Heart right ventricle (tissue), 16 donors: ENCODE measurements at regions of chr1 and their contacts with region 1.

Region 1: DNA sequence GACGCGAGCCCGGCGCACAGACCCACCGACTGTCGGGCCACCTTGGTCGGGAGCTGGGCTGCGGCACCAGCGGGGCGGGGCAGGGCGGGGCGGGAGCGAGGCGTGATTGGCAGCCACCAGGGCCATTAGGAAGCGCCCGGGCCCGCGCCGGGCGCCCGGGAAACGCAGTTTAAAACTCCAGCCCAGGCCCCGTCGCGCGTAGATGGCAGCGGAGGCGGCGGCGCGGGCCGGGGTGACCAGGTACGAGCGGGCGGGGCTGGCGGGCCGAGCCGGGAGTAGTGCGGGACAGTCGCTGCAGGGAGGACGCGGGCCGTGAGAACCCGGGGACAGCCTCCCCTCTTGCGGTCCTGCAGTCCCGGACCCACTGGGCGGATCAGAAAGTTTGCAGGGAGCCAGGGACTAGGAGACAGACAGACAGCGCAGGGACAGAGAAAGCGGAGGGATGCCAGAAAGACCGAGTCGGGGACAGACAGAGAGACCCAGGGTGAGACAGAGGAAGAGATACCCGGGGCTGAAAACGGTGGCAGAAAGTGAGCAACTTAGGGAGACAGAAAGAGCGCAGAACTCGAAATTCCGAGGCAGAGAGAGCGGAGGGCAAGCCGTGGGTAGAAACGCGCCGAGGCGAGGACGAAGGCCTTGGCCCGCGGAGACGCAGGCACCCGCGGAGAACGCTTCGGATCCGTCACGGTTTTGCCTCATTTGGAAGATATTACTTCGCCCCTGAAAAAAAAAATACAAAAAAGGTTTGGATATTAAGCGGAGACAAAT is at the start of gene DMBX1:
- DNase-seq: peak in 1 of 2 donors; percentile 20
- ATAC-seq: peak in 6 of 8 donors; percentile 33 to 66 (median 50)
- H3K4me3 ChIP-seq: peak within 1 kb of the TSS in 9 of 10 donors; percentile 22 to 46 (median 38)
- H3K27ac ChIP-seq: no peak within 1 kb of the TSS
- H3K4me1 ChIP-seq: peaks cover 4 to 26% (median 19%) of the 10 kb centered on the region in 9 donors
- H3K27me3 ChIP-seq: peaks cover 37 to 100% (median 100%) of the 10 kb centered on the region in 7 donors
- CTCF ChIP-seq: no peak
- total RNA-seq, gene DMBX1: not detected

Region 2: GRCh38 chr1:46522184-46522968 is 32.6 kb after region 1 on chr1:
- intact Hi-C with region 1: loop called in 1 of 10 experiments (anchors 5 kb)
- DNase-seq: no peak
- ATAC-seq: peak in 4 of 8 donors; percentile 9 to 71 (median 18)
- H3K4me3 ChIP-seq: no peak overlapping the region
- H3K27ac ChIP-seq: no peak overlapping the region
- H3K4me1 ChIP-seq: peaks cover 0 to 17% (median 4%) of the 10 kb centered on the region in 9 donors
- H3K27me3 ChIP-seq: peaks cover 0 to 63% (median 54%) of the 10 kb centered on the region in 7 donors
- CTCF ChIP-seq: no peak

Region 3: DNA sequence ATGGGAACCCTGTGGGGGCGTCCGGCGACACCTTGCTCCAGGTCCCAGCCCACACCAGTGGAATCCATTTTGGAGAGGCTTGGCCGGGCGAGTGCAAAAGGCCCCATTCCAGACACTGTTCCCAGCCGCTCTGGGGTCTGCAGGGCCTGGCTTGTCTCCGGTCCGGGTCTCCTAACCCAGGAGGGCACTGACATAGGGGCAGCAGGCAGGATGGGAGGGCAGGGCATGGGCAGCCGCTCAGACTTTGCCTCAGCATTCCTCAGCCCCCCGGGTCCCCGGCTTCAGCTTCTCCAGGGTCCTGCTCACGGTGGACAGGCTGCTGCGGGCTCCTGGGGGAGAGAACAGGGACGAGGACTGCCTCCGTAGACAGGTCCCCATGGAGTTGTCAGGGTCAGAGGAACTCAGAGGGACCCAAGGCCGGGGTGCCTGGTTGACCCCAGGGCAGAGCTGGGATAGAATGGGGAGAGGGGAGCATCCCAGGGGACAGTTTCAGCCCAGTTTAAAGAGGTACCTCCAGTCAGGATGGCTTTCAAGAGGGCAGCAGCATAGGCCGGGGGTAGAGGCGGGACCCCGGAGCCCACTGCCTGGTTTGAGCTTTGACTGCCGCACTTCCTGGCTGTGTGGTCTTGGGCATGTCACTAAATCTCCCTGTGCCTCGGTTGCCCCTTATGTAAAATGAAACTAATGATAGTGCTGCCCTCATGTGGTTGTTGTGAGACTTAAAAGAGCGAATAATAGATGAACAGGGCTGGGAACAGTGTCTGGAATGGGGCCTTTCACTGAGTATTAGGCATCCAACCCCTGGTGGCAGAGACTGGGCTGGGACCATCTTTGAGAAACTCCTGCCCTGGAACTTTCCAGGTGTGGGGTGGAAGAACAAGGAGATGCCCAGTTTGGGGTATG is 57.9 kb after region 1 on chr1:
- intact Hi-C with region 1: no loop called
- DNase-seq: no peak
- ATAC-seq: peak in 5 of 8 donors; percentile 16 to 45 (median 40)
- H3K4me3 ChIP-seq: no peak overlapping the region
- H3K27ac ChIP-seq: no peak overlapping the region
- H3K4me1 ChIP-seq: peaks cover 0 to 7% (median 5%) of the 10 kb centered on the region in 9 donors
- H3K27me3 ChIP-seq: peaks cover 6 to 84% (median 53%) of the 10 kb centered on the region in 7 donors
- CTCF ChIP-seq: peak in 7 of 9 donors; percentile 36 to 56 (median 48)

Region 4: DNA sequence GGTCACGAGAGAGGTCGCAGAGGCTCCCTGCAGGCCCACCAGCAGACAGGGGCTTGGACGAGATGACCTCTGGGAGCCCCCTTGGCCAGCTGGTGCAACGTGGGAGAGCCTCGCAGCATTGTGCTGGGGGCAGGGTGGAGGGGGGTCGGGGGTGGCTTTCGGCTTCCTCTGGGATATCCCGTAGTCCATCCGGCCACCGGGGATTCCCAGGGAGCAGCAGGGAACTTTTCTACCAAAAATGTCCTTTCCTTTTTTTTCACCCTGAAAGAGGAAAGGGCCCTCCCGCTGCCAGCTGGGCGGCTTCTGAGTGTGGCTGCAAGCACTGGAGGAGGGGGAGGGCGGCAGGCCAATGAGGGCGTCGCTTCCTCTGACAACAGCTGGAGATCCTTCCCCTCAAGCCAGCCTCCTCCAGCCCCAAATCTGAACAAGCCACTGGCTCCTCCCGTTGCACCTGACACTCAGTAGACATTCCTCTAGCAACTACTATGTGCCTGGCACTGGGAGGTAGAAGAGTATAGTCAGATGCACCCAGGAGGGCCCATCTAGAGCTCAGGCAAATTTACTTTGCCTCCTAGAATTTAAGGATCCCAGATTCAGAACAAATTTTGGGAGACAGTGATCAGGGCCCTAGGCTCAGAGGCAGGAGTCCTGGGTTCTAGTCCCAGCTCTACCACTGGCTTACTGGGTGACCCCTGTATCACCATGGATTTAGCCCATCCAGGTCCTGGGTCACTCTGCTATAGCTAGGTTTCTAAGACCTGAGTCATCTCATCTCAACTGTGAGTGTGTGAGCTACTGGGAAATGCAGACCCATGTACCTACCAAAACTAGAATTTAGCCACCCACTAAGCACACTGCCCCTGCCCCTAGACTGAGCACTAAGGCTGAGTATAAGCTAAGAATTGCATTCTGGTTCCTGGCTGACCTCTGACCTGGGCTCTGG is 124.1 kb after region 1 on chr1:
- intact Hi-C with region 1: no loop called
- DNase-seq: peak; percentile 93 to 94
- ATAC-seq: peak; percentile 62 to 84 (median 76)
- H3K4me3 ChIP-seq: peak overlapping the region in 8 of 10 donors; percentile 21 to 42 (median 32)
- H3K27ac ChIP-seq: peak overlapping the region; percentile 13 to 98 (median 73)
- H3K4me1 ChIP-seq: peaks cover 25 to 63% (median 58%) of the 10 kb centered on the region in 9 donors
- H3K27me3 ChIP-seq: no peaks in the 10 kb centered on the region
- CTCF ChIP-seq: no peak